ENCODE measurements at regions of chr13 and their contacts with region 1.

Region 1: GRCh38 chr13:49098771-49099512 is 121.2 kb upstream of the MLNR start:
- DNase-seq: no peak
- ATAC-seq: peak; percentile 28 to 55
- H3K4me3 ChIP-seq: no peak overlapping the region
- H3K27ac ChIP-seq: peak overlapping the region; percentile 58 to 85 (median 76)
- H3K4me1 ChIP-seq: peaks cover 22 to 23% of the 10 kb centered on the region in 2 donors
- H3K27me3 ChIP-seq: no peaks in the 10 kb centered on the region
- CTCF ChIP-seq: peak in 3 of 5 experiments; percentile 20 to 70 (median 36)
- POLR2A ChIP-seq: no peak

Region 2: DNA sequence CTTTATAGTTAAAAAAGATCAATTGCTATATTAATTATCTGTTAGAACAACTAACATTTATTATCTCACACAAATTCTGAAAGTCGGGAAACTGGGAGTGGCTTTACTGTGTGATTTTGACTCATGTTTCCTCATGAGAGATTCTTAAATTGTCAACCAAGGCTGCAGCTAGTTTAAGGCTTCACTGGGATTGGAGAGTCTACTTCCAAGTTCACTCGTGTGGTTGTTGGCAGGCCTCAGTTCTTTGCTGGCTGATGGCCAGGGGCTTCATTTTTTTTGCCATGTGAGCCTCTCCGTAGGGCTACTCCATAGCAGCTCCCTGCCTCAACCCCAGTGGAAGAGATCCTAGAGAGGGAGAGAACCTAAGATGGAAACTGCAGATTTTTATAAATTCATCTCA is 661.6 kb before region 1 on chr13:
- in situ Hi-C with region 1: no loop called
- intact Hi-C with region 1: no loop called
- DNase-seq: peak in 1 of 2 donors; percentile 43
- ATAC-seq: peak; percentile 51 to 66
- H3K4me3 ChIP-seq: no peak overlapping the region
- H3K27ac ChIP-seq: peak overlapping the region in 3 of 4 donors; percentile 21 to 41 (median 34)
- H3K4me1 ChIP-seq: peaks cover 15 to 19% of the 10 kb centered on the region in 2 donors
- H3K27me3 ChIP-seq: no peaks in the 10 kb centered on the region
- CTCF ChIP-seq: no peak
- POLR2A ChIP-seq: no peak

Region 3: DNA sequence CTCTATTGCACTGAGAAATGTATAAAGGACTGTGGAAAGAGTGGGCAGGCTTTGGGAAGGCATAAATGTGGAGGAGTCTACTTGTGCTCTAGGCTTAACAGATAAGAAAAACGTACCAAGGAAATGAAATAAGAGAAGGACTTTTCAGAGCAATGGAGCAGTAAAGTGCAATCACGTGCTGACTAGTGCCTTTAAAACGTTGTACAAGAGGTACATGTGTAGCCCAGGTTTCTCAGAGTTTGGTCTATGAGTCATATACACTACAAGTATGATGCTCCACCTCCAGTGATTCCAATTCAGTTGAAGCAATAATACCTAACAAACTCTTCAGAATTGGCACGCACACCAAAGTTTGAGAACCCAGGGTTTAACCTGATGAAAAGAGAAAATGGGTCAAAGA is 136.7 kb before region 1 on chr13:
- in situ Hi-C with region 1: no loop called
- intact Hi-C with region 1: no loop called
- DNase-seq: no peak
- ATAC-seq: no peak
- H3K4me3 ChIP-seq: no peak overlapping the region
- H3K27ac ChIP-seq: no peak overlapping the region
- H3K4me1 ChIP-seq: no peaks in the 10 kb centered on the region
- H3K27me3 ChIP-seq: no peaks in the 10 kb centered on the region
- CTCF ChIP-seq: no peak
- POLR2A ChIP-seq: no peak

Region 4: DNA sequence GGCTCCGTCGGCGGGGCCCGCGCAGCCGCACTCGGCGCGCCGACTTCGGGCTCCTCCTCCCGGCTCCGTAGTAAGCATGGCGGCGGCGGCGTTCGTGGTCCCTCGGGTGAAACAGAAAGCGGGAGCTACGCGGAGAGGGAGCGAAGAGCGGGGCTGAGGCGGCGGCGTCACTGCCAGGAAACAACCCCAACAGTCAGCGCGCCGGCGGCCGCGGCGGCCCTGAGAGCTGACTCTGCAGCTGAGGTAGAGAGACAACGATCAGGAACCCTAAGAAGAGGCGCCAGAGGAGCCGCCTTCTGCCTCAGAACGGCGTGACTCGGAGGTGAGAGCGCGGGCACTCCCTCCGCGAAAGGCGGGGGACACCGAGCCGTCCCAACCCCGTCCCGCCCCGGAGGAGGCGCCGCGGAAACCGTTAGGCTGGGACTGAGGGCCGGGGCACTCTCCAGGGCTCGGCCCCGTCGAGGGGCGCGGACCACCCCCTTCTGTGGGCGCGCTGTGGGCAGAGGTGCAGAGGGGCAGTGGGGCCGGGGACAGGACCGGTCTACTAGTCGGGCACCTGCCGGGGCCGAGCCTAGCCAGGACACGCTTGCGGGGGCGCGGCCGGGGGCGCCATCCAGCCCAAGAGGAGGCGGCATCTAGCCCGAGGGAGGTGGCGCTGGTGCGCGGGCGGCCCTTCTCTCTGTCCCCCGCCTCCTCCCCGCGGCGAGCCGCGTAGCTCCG is 122.9 kb before region 1 on chr13 and contains the start of gene FNDC3A:
- in situ Hi-C with region 1: loop called in 1 of 4 experiments (anchors 10 kb)
- intact Hi-C with region 1: loop called (anchors 10 kb)
- DNase-seq: peak; percentile 63 to 70
- ATAC-seq: peak; percentile 83 to 86
- H3K4me3 ChIP-seq: peak within 1 kb of the TSS; percentile 88 to 96 (median 92)
- H3K27ac ChIP-seq: peak within 1 kb of the TSS; percentile 98 to 99 (median 98)
- H3K4me1 ChIP-seq: peaks cover 18 to 28% of the 10 kb centered on the region in 2 donors
- H3K27me3 ChIP-seq: no peaks in the 10 kb centered on the region
- CTCF ChIP-seq: peak in 1 of 5 experiments; percentile 33
- POLR2A ChIP-seq: peak; percentile 31 to 60
- total RNA-seq, gene FNDC3A: 9.6 to 18.3 (median 10.4) TPM

Region 5: GRCh38 chr13:49060698-49061387 is 38.1 kb before region 1 on chr13:
- in situ Hi-C with region 1: no loop called
- intact Hi-C with region 1: no loop called
- DNase-seq: no peak
- ATAC-seq: no peak
- H3K4me3 ChIP-seq: no peak overlapping the region
- H3K27ac ChIP-seq: no peak overlapping the region
- H3K4me1 ChIP-seq: no peaks in the 10 kb centered on the region
- H3K27me3 ChIP-seq: no peaks in the 10 kb centered on the region
- CTCF ChIP-seq: no peak
- POLR2A ChIP-seq: no peak

Region 6: DNA sequence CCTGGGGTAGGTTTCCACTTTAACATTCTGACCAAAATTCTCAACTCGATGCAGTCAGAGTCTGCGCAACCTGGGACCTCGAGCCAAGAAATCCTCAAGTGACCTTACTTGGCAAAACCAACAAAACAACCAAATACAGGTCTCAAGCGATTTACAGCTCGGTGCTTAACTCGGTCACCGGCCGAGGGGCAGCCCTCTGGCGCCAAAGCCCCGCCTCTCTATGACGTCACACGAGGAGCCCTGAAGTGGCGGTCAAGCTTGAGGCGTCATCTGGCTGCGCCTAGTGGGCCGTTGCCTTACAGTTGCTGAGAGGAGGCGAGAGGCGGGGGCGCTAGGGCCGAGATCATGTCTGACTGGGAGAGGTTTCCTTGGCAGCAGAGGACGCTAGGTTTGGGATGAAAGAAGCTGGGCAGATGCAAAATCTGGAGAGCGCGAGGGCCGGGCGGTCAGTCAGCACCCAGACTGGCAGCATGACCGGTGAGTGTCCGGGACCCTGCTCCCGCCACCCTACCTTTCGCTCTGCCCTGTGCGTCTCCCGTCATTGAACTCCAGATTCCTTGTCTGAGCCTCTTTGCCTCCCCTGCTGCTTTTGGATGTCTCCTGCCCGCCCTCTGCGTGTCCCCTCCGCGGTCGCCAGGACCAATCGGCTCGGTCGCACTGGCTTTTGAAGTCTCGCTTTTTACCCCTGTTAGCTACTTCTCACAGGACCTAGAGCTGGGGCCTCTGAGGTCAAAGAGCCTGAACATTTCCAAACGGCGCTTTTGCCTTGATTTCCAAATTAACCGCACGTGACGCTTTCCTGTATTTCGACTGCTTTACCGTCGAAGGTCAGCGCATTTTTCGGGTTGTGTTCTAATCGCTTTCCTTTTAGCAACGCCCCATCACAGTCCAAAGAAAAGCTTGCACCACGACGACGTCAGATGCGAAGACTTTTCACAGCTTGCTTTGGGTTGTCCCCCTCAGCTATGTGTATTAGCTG is 149.0 kb after region 1 on chr13 and contains the start of gene CDADC1:
- in situ Hi-C with region 1: no loop called
- intact Hi-C with region 1: loop called (anchors 10 kb)
- DNase-seq: peak; percentile 93 to 95
- ATAC-seq: peak; percentile 97 to 98
- H3K4me3 ChIP-seq: peak within 1 kb of the TSS; percentile 86 to 93 (median 88)
- H3K27ac ChIP-seq: peak within 1 kb of the TSS; percentile 82 to 91 (median 86)
- H3K4me1 ChIP-seq: peaks cover 13 to 20% of the 10 kb centered on the region in 2 donors
- H3K27me3 ChIP-seq: no peaks in the 10 kb centered on the region
- CTCF ChIP-seq: peak in 1 of 5 experiments; percentile 24
- POLR2A ChIP-seq: peak; percentile 72 to 80
- total RNA-seq, gene CDADC1: 1.00 to 8.6 (median 3.9) TPM

Region 7: GRCh38 chr13:49279885-49280284 is 180.9 kb after region 1 on chr13:
- in situ Hi-C with region 1: loop called in 1 of 4 experiments (anchors 5 kb)
- intact Hi-C with region 1: loop called (anchors 2 kb)
- DNase-seq: no peak
- ATAC-seq: no peak
- H3K4me3 ChIP-seq: no peak overlapping the region
- H3K27ac ChIP-seq: no peak overlapping the region
- H3K4me1 ChIP-seq: no peaks in the 10 kb centered on the region
- H3K27me3 ChIP-seq: no peaks in the 10 kb centered on the region
- CTCF ChIP-seq: no peak
- POLR2A ChIP-seq: no peak